ENCODE measurements at regions of chr9 and their contacts with region 1.

Region 1: DNA sequence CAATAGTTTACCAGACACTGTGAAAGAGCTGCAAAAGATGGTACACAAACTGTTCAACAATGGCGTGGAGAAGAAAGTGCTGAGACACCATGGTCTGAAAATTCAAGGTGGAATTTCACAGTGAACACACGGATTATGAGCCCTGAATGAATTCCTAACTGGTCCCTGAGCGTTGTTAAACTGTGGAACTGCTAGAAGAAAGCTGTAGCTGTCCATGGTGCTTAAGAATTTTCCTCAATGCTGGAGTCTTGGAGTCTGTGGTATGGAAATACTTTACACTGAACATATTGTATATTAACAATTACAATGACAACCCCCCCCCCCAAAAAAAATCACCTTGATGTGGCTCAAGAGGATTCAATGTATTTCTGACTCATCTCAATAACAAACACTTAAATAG is 68.5 kb downstream of the SLC24A2 start:
- DNase-seq: no peak
- ATAC-seq: no peak
- H3K4me3 ChIP-seq: no peak overlapping the region
- H3K4me3 Mint-ChIP-seq: no peak overlapping the region
- H3K27ac ChIP-seq: no peak overlapping the region
- H3K27ac Mint-ChIP-seq: no peak overlapping the region
- H3K4me1 ChIP-seq: no peaks in the 10 kb centered on the region
- H3K4me1 Mint-ChIP-seq: no peaks in the 10 kb centered on the region
- H3K27me3 ChIP-seq: no peaks in the 10 kb centered on the region
- H3K27me3 Mint-ChIP-seq: peaks cover 5 to 23% (median 8%) of the 10 kb centered on the region in 5 donors

Region 2: DNA sequence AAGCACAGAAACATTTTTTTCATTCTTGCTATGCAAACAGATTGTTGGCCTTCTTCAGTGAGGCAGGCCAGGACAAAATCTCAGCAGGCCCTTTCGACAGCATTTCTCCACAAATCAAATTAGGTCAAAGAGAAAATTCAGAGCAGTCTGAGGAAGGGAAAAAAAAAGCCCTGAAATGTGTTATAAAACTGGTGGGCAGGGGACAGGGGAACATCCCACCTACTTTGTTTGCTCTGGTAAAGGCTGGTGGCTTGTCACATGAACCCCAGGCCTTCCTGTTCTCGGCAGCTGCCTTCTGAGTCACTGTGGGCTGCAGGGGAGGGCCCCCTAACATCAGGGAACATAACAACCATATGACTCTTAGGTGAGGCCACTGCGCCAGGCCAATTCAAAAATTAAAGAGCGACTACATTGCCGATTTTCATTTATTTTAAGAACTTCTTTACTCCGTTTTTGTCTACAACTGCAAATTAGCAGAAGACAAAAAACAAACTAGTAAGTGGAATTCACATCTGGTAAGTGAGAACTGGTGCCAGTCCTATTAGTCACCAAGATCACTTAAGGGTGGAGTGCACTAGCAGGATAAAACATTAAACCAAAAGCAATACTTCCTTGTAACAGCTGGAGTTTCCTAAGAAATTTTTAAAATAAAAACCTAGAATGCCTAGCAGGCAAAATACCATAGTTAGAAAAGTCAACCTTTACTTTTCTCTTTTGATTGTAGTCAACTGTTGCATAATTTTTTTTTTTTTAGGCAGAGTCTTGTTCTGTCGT is 536.0 kb before region 1 on chr9:
- CTCF ChIA-PET with region 1: no interaction called
- POLR2A ChIA-PET with region 1: no interaction called
- intact Hi-C with region 1: no loop called
- DNase-seq: peak; percentile 32 to 75 (median 47)
- ATAC-seq: peak; percentile 97
- H3K4me3 ChIP-seq: no peak overlapping the region
- H3K4me3 Mint-ChIP-seq: peak overlapping the region in 9 of 10 donors; percentile 3 to 66 (median 34)
- H3K27ac ChIP-seq: peak overlapping the region; percentile 62
- H3K27ac Mint-ChIP-seq: peak overlapping the region; percentile 83 to 97 (median 93)
- H3K4me1 ChIP-seq: peaks cover 11 to 17% of the 10 kb centered on the region in 2 donors
- H3K4me1 Mint-ChIP-seq: peaks cover 6 to 19% (median 13%) of the 10 kb centered on the region in 7 donors
- H3K27me3 ChIP-seq: no peaks in the 10 kb centered on the region
- H3K27me3 Mint-ChIP-seq: no peaks in the 10 kb centered on the region

Region 3: DNA sequence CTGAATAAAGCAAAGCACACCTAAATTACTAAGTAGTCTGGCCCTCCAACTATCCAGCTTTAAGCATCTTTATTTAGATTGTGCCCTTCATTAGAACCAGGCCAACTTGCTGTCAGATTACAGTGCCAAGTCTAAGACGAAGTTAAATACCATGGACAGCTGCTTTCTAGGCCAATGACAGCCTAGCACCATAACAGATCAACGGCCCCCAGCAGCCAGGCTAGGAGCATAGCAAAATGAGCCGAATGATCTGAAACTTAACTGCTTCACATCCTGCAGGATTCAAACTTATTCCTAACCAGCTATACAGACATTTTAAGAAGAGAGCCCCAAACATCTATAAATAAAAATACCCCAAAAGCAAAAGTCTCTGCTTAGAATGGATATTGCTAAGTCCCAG is 61.6 kb after region 1 on chr9:
- CTCF ChIA-PET with region 1: no interaction called
- POLR2A ChIA-PET with region 1: no interaction called
- intact Hi-C with region 1: loop called in 1 of 2 experiments (anchors 10 kb)
- DNase-seq: no peak
- ATAC-seq: no peak
- H3K4me3 ChIP-seq: no peak overlapping the region
- H3K4me3 Mint-ChIP-seq: no peak overlapping the region
- H3K27ac ChIP-seq: no peak overlapping the region
- H3K27ac Mint-ChIP-seq: no peak overlapping the region
- H3K4me1 ChIP-seq: no peaks in the 10 kb centered on the region
- H3K4me1 Mint-ChIP-seq: no peaks in the 10 kb centered on the region
- H3K27me3 ChIP-seq: no peaks in the 10 kb centered on the region
- H3K27me3 Mint-ChIP-seq: peaks cover 18 to 43% (median 33%) of the 10 kb centered on the region in 5 donors

Measured in naive thymus-derived CD4-positive, alpha-beta T cell (primary cell).